Esophagus muscularis mucosa (tissue), 4 donors: ENCODE measurements at regions of chr20 and their contacts with region 1.

Region 1: DNA sequence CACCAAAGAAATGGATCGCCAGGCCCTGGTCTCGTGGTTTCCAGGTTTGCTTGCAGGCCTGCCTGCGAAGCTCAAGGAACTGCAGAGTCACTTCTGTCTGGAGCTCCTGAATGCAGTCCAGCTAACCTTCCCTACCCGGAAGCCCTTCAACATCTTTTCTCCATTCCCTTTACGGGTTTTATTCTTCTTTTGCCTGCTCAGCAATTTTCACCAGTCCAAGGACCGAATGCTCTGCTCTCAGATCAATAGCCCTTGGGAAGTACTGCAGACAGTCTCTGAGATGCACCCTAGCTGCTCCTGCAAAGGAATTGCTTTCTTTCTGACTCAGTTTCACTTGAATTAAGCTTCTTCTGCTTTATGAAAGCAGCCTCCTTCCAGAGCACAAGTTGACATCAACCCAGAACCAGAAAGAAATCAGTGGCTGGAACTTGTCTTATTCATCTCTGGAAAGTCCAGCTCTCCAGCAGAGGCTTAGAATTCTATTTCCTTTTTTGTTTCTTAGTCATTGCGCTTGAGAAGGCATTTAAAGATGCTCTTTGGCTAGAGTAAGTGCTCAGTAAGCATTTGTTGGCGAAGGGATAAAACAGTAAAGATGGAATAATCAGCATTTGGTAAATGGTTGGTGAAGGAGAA is 18.7 kb upstream of the YWHAB start:
- DNase-seq: no peak
- H3K4me3 ChIP-seq: peak overlapping the region in 1 of 4 donors; percentile 46
- H3K27ac ChIP-seq: no peak overlapping the region
- H3K4me1 ChIP-seq: peaks cover 21 to 39% (median 34%) of the 10 kb centered on the region in 4 donors
- H3K27me3 ChIP-seq: no peaks in the 10 kb centered on the region
- CTCF ChIP-seq: no peak
- EP300 ChIP-seq: no peak
- POLR2A ChIP-seq: no peak

Region 2: GRCh38 chr20:44651684-44652423 is 215.0 kb before region 1 on chr20 and contains the start of gene ADA:
- intact Hi-C with region 1: no loop called
- DNase-seq: no peak
- H3K4me3 ChIP-seq: peak within 1 kb of the TSS; percentile 74 to 87 (median 82)
- H3K27ac ChIP-seq: peak within 1 kb of the TSS; percentile 77 to 88 (median 82)
- H3K4me1 ChIP-seq: peaks cover 26 to 45% (median 39%) of the 10 kb centered on the region in 4 donors
- H3K27me3 ChIP-seq: no peaks in the 10 kb centered on the region
- CTCF ChIP-seq: peak in 1 of 3 experiments; percentile 13
- EP300 ChIP-seq: no peak
- POLR2A ChIP-seq: no peak
- total RNA-seq, gene ADA: 9.6 to 18.4 (median 13.4) TPM

Region 3: DNA sequence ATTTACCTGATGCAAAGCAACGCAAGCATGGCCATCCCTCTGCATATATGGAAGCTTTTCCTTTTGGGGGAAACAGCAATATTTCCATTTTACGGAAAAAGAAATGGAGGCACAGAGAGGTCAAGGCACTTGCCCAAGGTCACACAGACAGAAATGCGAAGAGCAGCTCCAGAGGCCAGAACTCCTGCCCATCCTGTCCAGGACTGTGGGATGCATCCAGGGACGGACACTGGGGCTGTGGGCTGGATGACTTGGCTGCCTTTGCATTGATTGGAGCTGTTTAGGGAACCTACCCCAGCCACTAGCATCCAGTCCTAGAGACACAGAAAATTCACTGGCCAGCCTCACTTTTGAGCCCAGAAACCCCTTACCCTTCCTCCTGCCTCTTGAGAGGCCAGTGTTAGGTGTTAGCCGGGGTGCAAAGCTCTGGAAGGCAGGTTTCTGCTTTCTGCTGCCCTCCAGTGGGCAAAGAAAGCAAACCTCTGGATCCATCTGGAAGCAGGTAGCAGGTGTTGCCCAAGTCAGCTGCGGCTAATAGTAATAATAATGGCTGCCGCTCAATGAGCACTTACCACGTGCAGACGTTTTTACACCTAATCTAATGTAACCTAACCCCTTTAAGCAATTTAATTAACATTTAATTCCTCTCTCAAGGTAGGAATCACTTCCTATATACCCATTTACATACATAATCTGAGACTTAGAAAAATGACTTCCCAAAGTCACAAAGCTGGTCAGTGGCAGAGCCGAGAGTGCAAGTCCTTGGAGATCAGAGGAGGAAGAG is 183.4 kb before region 1 on chr20:
- intact Hi-C with region 1: loop called (anchors 2 kb)
- DNase-seq: no peak
- H3K4me3 ChIP-seq: no peak overlapping the region
- H3K27ac ChIP-seq: no peak overlapping the region
- H3K4me1 ChIP-seq: peaks cover 10 to 20% (median 19%) of the 10 kb centered on the region in 4 donors
- H3K27me3 ChIP-seq: no peaks in the 10 kb centered on the region
- CTCF ChIP-seq: peak; percentile 35 to 54 (median 39)
- EP300 ChIP-seq: no peak
- POLR2A ChIP-seq: no peak

Region 4: DNA sequence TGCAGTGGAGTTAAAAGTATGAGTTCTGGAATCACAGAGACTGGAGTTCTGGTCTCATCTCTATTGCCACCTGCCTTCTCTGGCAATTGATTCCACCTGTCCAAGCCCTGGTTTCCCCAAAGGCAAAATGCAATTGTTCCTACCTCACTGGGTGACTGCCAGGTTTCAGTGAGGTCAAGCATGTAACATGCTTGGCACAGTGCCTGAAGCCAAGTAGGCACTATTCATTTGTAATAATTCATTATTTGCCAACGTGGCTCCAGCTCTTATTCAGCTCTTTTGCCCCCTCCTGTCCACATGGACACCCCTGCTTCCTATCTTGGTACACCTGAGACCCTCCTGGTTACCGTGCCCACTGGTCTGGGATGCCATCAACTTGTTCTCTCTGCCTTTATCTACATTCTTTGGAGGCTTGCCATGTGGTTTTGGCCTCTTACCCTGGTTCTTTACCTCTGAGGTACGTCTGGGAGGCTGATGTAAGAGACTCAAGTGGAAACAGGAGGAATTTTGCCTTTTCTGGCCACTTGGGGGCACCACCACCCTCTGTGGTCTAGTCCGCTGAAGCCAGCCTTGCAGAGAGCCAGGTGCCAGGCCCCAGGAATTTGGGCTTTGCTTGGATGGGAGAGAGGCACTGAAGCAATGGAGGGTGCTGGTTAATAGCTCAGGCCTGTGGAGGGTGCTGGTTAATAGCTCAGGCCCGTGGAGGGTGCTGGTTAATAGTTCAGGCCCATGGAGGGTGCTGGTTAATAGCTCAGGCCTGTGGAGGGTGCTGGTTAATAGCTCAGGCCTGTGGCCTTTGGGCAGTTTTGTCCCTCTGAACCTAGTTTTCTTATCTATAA is 119.4 kb before region 1 on chr20:
- intact Hi-C with region 1: loop called (anchors 1 kb)
- DNase-seq: peak; percentile 96
- H3K4me3 ChIP-seq: peak overlapping the region; percentile 67 to 75 (median 74)
- H3K27ac ChIP-seq: no peak overlapping the region
- H3K4me1 ChIP-seq: peaks cover 28 to 57% (median 54%) of the 10 kb centered on the region in 4 donors
- H3K27me3 ChIP-seq: peaks cover 0 to 37% (median 7%) of the 10 kb centered on the region in 4 donors
- CTCF ChIP-seq: peak; percentile 59 to 79 (median 65)
- EP300 ChIP-seq: no peak
- POLR2A ChIP-seq: no peak

Region 5: GRCh38 chr20:44805979-44806620 is 60.7 kb before region 1 on chr20:
- intact Hi-C with region 1: loop called (anchors 5 kb)
- DNase-seq: no peak
- H3K4me3 ChIP-seq: no peak overlapping the region
- H3K27ac ChIP-seq: no peak overlapping the region
- H3K4me1 ChIP-seq: peaks cover 0 to 26% (median 19%) of the 10 kb centered on the region in 4 donors
- H3K27me3 ChIP-seq: peaks cover 3 to 81% (median 18%) of the 10 kb centered on the region in 4 donors
- CTCF ChIP-seq: no peak
- EP300 ChIP-seq: no peak
- POLR2A ChIP-seq: no peak

Region 6: DNA sequence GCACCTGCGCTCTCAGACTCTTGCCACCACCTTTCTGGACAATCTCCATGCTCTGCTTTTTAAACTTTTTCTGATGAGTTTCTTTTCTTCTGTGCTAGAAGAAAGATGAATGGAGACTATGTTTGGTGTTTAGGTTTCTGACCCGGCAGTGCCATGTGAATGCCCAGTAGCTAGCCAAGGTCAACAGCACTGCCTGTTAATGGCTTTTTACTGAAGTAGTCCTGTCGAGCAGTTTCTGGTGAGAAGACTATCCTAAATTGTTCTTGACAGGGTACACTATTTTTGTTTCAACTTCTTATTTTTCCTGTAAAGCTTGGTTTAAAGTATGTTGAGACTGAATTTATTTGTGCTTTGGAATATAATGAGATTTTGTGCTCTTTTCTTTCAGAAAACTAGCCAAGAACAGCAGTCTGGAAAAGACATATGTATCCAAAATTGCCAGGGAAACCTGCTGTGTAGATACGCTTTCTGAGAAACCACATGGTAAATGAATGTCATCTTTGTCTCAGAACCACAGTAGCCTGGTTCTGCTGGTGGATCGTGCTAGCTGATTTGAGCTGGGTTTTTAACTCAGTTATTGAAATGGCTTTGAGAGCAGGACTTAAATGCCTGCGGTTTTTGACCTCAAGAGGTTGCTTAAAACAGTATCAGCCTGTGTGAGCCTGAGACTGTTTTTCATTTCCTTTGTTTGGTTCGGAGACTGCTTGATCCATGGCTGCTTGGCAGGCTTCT is 186.0 kb after region 1 on chr20:
- intact Hi-C with region 1: no loop called
- DNase-seq: no peak
- H3K4me3 ChIP-seq: no peak overlapping the region
- H3K27ac ChIP-seq: no peak overlapping the region
- H3K4me1 ChIP-seq: peaks cover 18 to 43% (median 37%) of the 10 kb centered on the region in 4 donors
- H3K27me3 ChIP-seq: no peaks in the 10 kb centered on the region
- CTCF ChIP-seq: no peak
- EP300 ChIP-seq: no peak
- POLR2A ChIP-seq: no peak